Caco-2 (cell line): ENCODE measurements at regions of chr2 and their contacts with region 1.

Region 1: DNA sequence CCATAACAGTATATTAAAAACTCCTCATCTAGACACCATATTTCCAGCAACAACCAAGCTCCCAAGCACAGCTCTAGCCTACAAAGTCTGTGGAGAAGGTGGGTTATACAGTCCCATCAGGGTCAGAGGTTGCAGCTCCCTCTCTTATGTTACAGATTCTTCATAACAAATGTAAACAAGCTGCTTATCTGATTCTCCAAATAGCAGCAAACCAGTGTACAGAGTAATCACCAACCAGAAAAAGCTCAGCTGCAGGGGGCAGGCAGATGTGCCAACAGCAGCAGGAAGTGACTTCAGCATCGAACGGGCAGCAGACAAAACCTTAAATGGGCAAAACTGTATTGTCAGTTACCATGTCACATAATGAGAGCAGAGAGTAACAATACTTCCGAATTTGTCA is 52.9 kb upstream of the NABP1 start:
- DNase-seq: peak; percentile 40 to 54
- H3K4me3 ChIP-seq: no peak overlapping the region
- H3K4me3 Mint-ChIP-seq: no peak overlapping the region
- H3K27ac Mint-ChIP-seq: peak overlapping the region; percentile 89
- H3K4me1 ChIP-seq: peaks cover 76% of the 10 kb centered on the region
- H3K4me1 Mint-ChIP-seq: peaks cover 56% of the 10 kb centered on the region
- H3K27me3 ChIP-seq: no peaks in the 10 kb centered on the region
- H3K27me3 Mint-ChIP-seq: no peaks in the 10 kb centered on the region
- CTCF ChIP-seq: no peak

Region 2: GRCh38 chr2:191478799-191479679 is 146.0 kb before region 1 on chr2:
- CTCF ChIA-PET with region 1: no interaction called
- POLR2A ChIA-PET with region 1: no interaction called
- intact Hi-C with region 1: no loop called
- DNase-seq: peak; percentile 71 to 87
- H3K4me3 ChIP-seq: no peak overlapping the region
- H3K4me3 Mint-ChIP-seq: no peak overlapping the region
- H3K27ac Mint-ChIP-seq: no peak overlapping the region
- H3K4me1 ChIP-seq: peaks cover 24% of the 10 kb centered on the region
- H3K4me1 Mint-ChIP-seq: peaks cover 23% of the 10 kb centered on the region
- H3K27me3 ChIP-seq: no peaks in the 10 kb centered on the region
- H3K27me3 Mint-ChIP-seq: no peaks in the 10 kb centered on the region
- CTCF ChIP-seq: no peak

Region 3: GRCh38 chr2:191574232-191574631 is 50.8 kb before region 1 on chr2:
- CTCF ChIA-PET with region 1: no interaction called
- POLR2A ChIA-PET with region 1: no interaction called
- intact Hi-C with region 1: loop called (anchors 2 kb)
- DNase-seq: peak in 1 of 2 experiments; percentile 14
- H3K4me3 ChIP-seq: no peak overlapping the region
- H3K4me3 Mint-ChIP-seq: peak overlapping the region; percentile 24
- H3K27ac Mint-ChIP-seq: peak overlapping the region; percentile 79
- H3K4me1 ChIP-seq: peaks cover 59% of the 10 kb centered on the region
- H3K4me1 Mint-ChIP-seq: peaks cover 49% of the 10 kb centered on the region
- H3K27me3 ChIP-seq: no peaks in the 10 kb centered on the region
- H3K27me3 Mint-ChIP-seq: no peaks in the 10 kb centered on the region
- CTCF ChIP-seq: no peak

Region 4: GRCh38 chr2:191582355-191582754 is 42.7 kb before region 1 on chr2:
- CTCF ChIA-PET with region 1: no interaction called
- POLR2A ChIA-PET with region 1: no interaction called
- intact Hi-C with region 1: loop called (anchors 1 kb)
- DNase-seq: peak; percentile 79 to 80
- H3K4me3 ChIP-seq: no peak overlapping the region
- H3K4me3 Mint-ChIP-seq: peak overlapping the region; percentile 46
- H3K27ac Mint-ChIP-seq: peak overlapping the region; percentile 97
- H3K4me1 ChIP-seq: peaks cover 45% of the 10 kb centered on the region
- H3K4me1 Mint-ChIP-seq: peaks cover 13% of the 10 kb centered on the region
- H3K27me3 ChIP-seq: no peaks in the 10 kb centered on the region
- H3K27me3 Mint-ChIP-seq: no peaks in the 10 kb centered on the region
- CTCF ChIP-seq: no peak

Region 5: GRCh38 chr2:191691016-191691735 is 66.2 kb after region 1 on chr2:
- CTCF ChIA-PET with region 1: no interaction called
- POLR2A ChIA-PET with region 1: no interaction called
- intact Hi-C with region 1: loop called (anchors 1 kb)
- DNase-seq: peak; percentile 56 to 70
- H3K4me3 ChIP-seq: no peak overlapping the region
- H3K4me3 Mint-ChIP-seq: peak overlapping the region; percentile 52
- H3K27ac Mint-ChIP-seq: peak overlapping the region; percentile 53
- H3K4me1 ChIP-seq: peaks cover 62% of the 10 kb centered on the region
- H3K4me1 Mint-ChIP-seq: peaks cover 44% of the 10 kb centered on the region
- H3K27me3 ChIP-seq: no peaks in the 10 kb centered on the region
- H3K27me3 Mint-ChIP-seq: no peaks in the 10 kb centered on the region
- CTCF ChIP-seq: peak; percentile 72 to 82

Region 6: GRCh38 chr2:191740016-191740419 is 115.0 kb after region 1 on chr2:
- CTCF ChIA-PET with region 1: no interaction called
- POLR2A ChIA-PET with region 1: no interaction called
- intact Hi-C with region 1: no loop called
- DNase-seq: no peak
- H3K4me3 ChIP-seq: no peak overlapping the region
- H3K4me3 Mint-ChIP-seq: no peak overlapping the region
- H3K27ac Mint-ChIP-seq: no peak overlapping the region
- H3K4me1 ChIP-seq: no peaks in the 10 kb centered on the region
- H3K4me1 Mint-ChIP-seq: no peaks in the 10 kb centered on the region
- H3K27me3 ChIP-seq: no peaks in the 10 kb centered on the region
- H3K27me3 Mint-ChIP-seq: no peaks in the 10 kb centered on the region
- CTCF ChIP-seq: no peak